Adrenal gland (tissue), 19 donors: ENCODE measurements at regions of chr17 and their contacts with region 1.

Region 1: DNA sequence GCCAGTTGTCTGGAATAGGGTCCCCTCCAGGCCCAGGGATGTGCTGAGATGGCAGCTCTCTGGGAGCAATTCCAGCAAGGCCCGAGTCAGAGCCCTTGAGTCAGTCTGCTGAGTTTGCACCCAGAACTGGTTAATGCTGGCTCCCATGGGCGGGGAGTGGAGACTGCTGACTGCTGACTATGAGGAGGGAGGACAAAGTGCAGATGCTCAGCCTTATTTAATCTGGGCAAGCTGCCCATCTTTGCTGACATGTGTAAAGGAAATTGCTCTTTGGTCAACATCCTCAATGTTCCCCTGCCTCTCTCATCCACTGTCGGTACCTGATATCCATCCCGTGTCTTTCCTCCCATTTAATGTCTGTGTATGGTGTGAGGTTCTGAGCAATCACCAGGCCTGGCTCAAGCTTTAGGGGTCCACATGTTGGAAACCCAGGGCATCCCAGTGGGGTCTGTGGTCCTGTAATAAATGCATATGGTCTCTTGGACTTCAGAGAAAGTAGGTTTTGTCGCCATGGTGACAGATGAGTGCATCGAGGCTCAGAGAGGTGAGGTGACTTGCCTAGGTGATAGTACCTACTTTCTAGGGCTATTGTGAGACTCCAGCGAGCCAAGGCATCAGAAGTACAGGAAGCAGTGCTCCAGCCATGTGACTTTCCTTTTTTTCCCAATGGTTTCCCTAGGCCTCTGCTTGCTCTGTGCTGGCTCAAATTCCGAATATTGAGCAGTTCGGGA is 20.0 kb upstream of the RNF135 start:
- DNase-seq: peak; percentile 62 to 89 (median 76)
- H3K4me3 ChIP-seq: no peak overlapping the region
- H3K27ac ChIP-seq: peak overlapping the region in 2 of 5 donors; percentile 65 to 74
- H3K4me1 ChIP-seq: peaks cover 8 to 21% of the 10 kb centered on the region in 2 donors
- H3K27me3 ChIP-seq: no peaks in the 10 kb centered on the region
- CTCF ChIP-seq: no peak
- POLR2A ChIP-seq: no peak

Region 2: DNA sequence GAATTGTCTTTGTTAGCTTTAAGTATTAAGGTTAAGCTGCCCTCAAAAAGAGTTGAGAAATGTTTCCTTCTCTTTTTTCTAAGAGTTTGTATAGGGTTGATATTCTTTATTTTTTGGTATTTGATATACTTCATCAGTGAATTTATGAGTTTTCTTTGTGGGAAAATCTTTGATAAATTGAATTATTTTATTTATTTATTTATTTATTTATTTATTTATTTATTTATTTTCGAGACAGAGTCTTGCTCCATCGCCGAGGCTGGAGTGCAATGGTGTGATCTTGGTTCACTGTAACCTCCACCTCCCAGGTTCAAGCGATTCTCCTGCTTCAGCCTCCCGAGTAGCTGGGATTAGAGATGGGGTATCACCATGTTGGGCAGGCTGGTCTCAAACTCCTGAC is 64.6 kb before region 1 on chr17:
- intact Hi-C with region 1: no loop called
- DNase-seq: peak in 1 of 7 donors; percentile 13
- H3K4me3 ChIP-seq: no peak overlapping the region
- H3K27ac ChIP-seq: no peak overlapping the region
- H3K4me1 ChIP-seq: no peaks in the 10 kb centered on the region
- H3K27me3 ChIP-seq: no peaks in the 10 kb centered on the region
- CTCF ChIP-seq: no peak
- POLR2A ChIP-seq: no peak

Region 3: GRCh38 chr17:30906101-30906911 is 44.5 kb before region 1 on chr17 and contains the start of gene TEFM:
- intact Hi-C with region 1: loop called in 1 of 2 experiments (anchors 10 kb)
- DNase-seq: peak; percentile 87 to 93 (median 88)
- H3K4me3 ChIP-seq: peak within 1 kb of the TSS; percentile 20 to 66 (median 63)
- H3K27ac ChIP-seq: peak within 1 kb of the TSS; percentile 64 to 94 (median 85)
- H3K4me1 ChIP-seq: peaks cover 5 to 9% of the 10 kb centered on the region in 2 donors
- H3K27me3 ChIP-seq: no peaks in the 10 kb centered on the region
- CTCF ChIP-seq: no peak
- POLR2A ChIP-seq: peak; percentile 66 to 75
- total RNA-seq, gene TEFM: 8.1 to 28.2 (median 12.6) TPM